GM13977 (cell line): ENCODE measurements at regions of chr17 and their contacts with region 1.

Region 1: GRCh38 chr17:31448467-31449077 is 57.1 kb downstream of the RAB11FIP4 start:
- DNase-seq: no peak
- CTCF ChIP-seq: no peak

Region 2: DNA sequence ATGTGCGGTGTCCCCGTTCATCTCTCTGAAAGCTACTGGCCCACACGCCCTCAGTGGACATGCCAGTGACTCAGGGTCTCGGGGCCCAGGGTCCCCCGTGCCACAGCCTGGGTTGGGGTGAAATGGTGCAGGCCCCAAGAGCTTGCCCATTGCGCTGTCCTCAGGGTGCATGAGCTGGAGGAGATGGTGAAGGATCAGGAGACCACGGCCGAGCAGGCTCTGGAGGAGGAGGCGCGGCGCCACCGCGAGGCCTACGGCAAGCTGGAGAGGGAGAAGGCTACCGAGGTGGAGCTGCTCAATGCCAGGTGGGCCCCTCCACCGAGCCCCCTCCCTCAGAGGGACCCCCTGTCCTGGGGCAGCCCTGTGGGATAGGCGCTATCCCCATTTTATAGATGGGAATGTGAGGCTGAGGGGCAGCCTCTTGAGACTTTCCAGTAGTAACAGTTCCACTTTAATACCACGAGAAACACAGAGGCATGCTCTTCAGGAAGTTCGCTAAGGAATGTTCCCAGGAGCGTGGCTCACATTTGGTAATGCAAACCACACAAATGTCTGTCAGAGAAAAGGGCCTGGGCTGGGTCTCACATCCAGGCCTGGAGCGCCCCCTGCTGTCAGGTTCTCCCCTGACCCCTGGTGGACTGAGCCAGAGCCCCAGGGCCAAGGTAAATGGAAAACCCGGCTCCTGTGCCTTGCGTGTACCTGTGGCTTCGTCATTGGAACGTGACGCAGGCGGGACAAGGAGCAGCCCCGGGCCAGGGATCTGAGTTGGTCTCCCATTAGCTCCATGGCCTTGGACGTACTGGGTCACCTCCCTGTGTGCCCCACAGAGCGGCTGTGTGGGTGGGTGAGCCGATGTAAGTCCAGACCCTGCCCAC is 76.6 kb after region 1 on chr17:
- in situ Hi-C with region 1: loop called (anchors 10 kb)
- DNase-seq: peak; percentile 91
- CTCF ChIP-seq: peak; percentile 88